PC-9 (cell line): ENCODE measurements at regions of chr9 and their contacts with region 1.

Region 1: DNA sequence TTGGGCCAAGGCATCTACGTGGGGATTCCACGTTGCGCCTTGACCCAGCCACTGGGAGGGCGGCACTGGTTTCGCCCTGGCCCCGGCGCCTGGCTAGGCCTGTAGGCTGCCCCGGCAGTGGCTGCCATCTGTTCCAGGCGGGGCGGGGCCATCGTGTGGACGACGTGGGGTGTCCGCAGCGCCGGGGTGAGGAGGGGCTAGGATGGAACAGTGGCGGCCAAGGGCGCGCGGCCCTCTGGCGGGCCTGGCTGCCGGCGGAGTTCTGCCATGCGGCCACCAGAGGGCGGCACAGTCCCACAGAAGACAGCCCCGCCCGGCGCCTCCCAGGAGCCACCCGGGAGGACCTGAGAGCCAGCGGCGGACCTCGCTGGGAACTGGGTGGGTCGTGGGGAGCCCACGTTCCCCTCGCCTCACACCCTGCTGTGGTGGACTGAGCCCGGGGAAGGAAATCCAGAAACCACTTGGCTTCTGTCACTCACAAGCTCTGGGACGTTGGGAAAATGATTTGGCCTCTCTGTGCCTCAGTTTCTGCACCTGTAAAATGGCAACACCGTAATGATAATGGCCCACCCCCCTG is 22.6 kb upstream of the RAPGEF1 start:
- DNase-seq: peak in 1 of 2 experiments; percentile 75
- H3K4me3 ChIP-seq: no peak overlapping the region
- H3K27ac ChIP-seq: no peak overlapping the region
- H3K4me1 ChIP-seq: 0 out of 2 replicates have a peak, but pooled peaks cover 5% of the 10 kb centered on the region
- H3K27me3 ChIP-seq: peaks cover 38% of the 10 kb centered on the region
- CTCF ChIP-seq: peak; percentile 87

Region 2: GRCh38 chr9:131546336-131547084 is 215.9 kb before region 1 on chr9:
- CTCF ChIA-PET with region 1: no interaction called
- POLR2A ChIA-PET with region 1: interaction called, 11 read pairs
- intact Hi-C with region 1: no loop called
- DNase-seq: peak; percentile 51 to 69
- H3K4me3 ChIP-seq: peak overlapping the region; percentile 40; the same call in 1 of the 2 replicates
- H3K27ac ChIP-seq: no peak overlapping the region
- H3K4me1 ChIP-seq: peaks cover 21% of the 10 kb centered on the region
- H3K27me3 ChIP-seq: peaks cover 64% of the 10 kb centered on the region
- CTCF ChIP-seq: no peak

Region 3: DNA sequence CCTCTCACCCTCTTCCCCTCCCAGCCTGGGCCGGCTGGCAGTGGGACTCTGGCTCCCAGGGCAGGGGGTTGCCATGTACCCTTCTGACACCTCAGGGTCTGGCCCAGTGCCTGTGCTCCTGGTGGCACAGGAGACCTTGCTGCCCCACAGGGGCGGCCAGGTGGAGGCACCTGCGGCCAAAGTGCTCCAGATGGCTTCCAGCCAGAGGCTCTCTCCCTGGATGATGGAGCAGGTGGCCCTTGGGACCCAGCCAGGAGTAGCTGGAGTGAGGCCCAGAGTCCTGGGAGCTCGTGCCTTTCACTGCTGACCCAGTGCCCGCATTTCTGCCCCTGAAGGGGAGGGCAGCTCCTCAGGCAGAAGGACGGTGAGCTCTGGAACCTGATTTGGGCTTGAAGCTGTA is 486.7 kb after region 1 on chr9:
- CTCF ChIA-PET with region 1: interaction called, 6 read pairs
- POLR2A ChIA-PET with region 1: no interaction called
- intact Hi-C with region 1: loop called (anchors 1 kb)
- DNase-seq: no peak
- H3K4me3 ChIP-seq: no peak overlapping the region
- H3K27ac ChIP-seq: no peak overlapping the region
- H3K4me1 ChIP-seq: no peaks in the 10 kb centered on the region
- H3K27me3 ChIP-seq: peaks cover 25% of the 10 kb centered on the region
- CTCF ChIP-seq: no peak